PC-9 (cell line): ENCODE measurements at regions of chr1 and their contacts with region 1.

Region 1: GRCh38 chr1:27858072-27858958 is 14.0 kb upstream of the THEMIS2 start:
- DNase-seq: peak; percentile 58 to 80
- H3K4me3 ChIP-seq: no peak overlapping the region
- H3K27ac ChIP-seq: no peak overlapping the region
- H3K4me1 ChIP-seq: peaks cover 9% of the 10 kb centered on the region
- H3K27me3 ChIP-seq: no peaks in the 10 kb centered on the region
- CTCF ChIP-seq: peak; percentile 91

Region 2: GRCh38 chr1:27430903-27431600 is 427.3 kb before region 1 on chr1:
- CTCF ChIA-PET with region 1: no interaction called
- POLR2A ChIA-PET with region 1: no interaction called
- intact Hi-C with region 1: no loop called
- DNase-seq: no peak
- H3K4me3 ChIP-seq: no peak overlapping the region
- H3K27ac ChIP-seq: no peak overlapping the region
- H3K4me1 ChIP-seq: peaks cover 3% of the 10 kb centered on the region
- H3K27me3 ChIP-seq: no peaks in the 10 kb centered on the region
- CTCF ChIP-seq: no peak

Region 3: DNA sequence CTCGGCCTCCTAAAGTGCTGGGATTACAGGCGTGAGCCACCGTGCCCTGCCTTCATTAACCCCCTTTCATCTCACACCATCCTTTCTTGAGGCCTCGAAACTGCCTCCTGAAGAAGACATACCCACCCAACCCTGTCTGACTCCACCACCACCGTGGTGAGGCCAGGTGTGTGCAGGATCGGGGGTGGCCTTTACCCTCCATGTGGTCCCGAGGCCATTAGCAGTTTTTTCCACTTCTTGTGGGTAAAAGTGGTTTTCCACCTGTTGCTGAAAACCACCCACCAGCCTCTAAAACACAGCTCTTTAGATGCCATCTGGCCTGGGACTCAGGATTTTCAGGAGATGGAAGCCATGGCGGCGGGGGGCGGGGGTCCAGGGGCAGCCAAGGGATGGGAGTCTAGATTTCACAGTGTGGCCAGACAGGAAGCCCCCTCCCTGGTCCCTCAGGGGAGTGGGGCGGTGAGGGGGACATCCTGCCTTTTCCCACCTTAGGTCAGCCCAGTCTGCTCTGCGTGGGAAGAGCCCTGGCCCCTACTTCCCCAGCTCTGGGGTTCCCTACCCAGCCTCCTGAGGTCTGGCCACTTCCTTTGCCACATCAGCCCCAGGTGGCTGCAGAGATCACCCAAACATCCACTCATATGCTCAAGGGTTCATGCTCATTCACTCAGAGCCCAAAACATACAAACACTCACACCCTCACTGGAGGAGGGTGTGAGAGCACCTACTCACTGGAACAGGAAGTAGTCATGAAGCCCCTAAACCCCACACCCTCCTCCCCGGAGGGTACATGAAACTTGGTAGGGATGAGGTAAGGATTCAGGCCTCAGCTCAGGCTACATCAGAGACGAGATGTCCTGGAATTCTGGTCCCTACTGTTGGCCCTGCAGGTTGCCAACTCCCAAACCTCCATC is 225.7 kb before region 1 on chr1:
- CTCF ChIA-PET with region 1: interaction called, 12 read pairs
- POLR2A ChIA-PET with region 1: no interaction called
- intact Hi-C with region 1: no loop called
- DNase-seq: no peak
- H3K4me3 ChIP-seq: no peak overlapping the region
- H3K27ac ChIP-seq: no peak overlapping the region
- H3K4me1 ChIP-seq: no peaks in the 10 kb centered on the region
- H3K27me3 ChIP-seq: peaks cover 19% of the 10 kb centered on the region
- CTCF ChIP-seq: no peak

Region 4: DNA sequence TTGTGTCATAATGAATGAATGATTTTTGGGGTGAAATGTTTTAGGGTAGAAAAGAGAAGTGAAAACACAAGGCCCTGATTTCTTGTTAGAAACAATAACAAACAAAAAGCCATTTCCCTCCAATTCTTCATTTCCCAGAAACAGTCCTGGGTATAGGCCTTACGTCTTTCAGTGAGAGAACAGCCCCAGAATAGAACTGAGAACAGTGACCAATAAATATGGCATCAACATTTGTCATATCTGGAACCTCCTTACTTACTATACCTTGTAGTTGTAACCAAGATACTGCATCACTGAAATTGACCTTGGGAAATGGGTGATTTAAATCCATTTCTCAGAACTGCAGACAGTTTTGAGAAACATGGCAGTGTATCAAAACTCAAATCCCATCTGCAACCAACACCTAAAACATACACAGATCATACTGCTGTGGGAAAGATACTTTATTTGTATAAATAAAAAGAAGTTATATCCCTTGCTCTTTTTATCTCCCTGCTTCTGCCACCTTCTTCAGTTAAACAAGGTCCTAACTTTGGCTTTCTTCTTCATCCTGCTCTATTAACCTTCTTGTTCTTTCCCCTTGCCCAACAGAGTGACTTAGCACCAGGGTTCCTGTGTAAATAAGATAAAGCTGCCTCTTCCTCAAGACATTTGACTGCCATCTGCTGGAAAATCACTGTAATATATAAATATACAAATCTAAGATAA is 121.0 kb after region 1 on chr1:
- CTCF ChIA-PET with region 1: interaction called, 12 read pairs
- POLR2A ChIA-PET with region 1: no interaction called
- intact Hi-C with region 1: loop called (anchors 2 kb)
- DNase-seq: peak in 1 of 2 experiments; percentile 46
- H3K4me3 ChIP-seq: no peak overlapping the region
- H3K27ac ChIP-seq: no peak overlapping the region
- H3K4me1 ChIP-seq: no peaks in the 10 kb centered on the region
- H3K27me3 ChIP-seq: no peaks in the 10 kb centered on the region
- CTCF ChIP-seq: peak; percentile 69

Region 5: DNA sequence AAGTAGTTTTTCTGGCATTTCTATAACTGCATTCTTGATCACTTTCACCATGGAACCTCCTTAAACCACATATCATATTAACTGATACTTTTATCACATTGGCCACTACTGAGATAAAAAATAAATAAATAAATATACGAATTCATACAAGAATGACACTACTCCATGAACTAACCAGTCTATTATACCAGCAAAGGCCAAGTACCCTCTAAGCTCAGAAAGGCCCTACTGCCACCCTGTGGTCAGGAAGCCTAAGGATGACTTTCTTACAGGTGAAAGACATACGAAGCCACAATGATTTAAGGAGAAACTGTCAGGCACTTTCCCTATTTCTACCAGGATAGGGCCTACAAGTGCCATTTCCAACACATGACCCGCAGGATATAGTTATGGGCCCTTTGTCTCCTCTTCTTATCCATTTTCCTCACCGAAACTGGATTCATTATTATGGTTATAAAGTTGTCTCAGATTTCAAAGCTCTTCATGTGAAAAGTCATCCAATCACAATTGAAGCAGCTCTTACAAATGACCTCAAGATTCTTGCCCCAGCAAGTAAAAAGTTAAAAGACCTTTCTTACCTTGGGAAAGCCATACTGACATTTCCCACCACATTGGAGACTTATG is 350.6 kb after region 1 on chr1:
- CTCF ChIA-PET with region 1: no interaction called
- POLR2A ChIA-PET with region 1: no interaction called
- intact Hi-C with region 1: loop called (anchors 2 kb)
- DNase-seq: peak; percentile 41 to 49
- H3K4me3 ChIP-seq: no peak overlapping the region
- H3K27ac ChIP-seq: no peak overlapping the region
- H3K4me1 ChIP-seq: no peaks in the 10 kb centered on the region
- H3K27me3 ChIP-seq: no peaks in the 10 kb centered on the region
- CTCF ChIP-seq: peak; percentile 76